Natural killer cell (primary cell): ENCODE measurements at regions of chr3 and their contacts with region 1.

Region 1: GRCh38 chr3:15405448-15406050 is 21.8 kb downstream of the METTL6 start:
- DNase-seq: peak in 1 of 2 donors; percentile 78
- ATAC-seq: peak; percentile 57 to 78 (median 74)
- H3K4me3 ChIP-seq: no peak overlapping the region
- H3K4me3 Mint-ChIP-seq: no peak overlapping the region
- H3K27ac ChIP-seq: no peak overlapping the region
- H3K27ac Mint-ChIP-seq: no peak overlapping the region
- H3K4me1 ChIP-seq: no peaks in the 10 kb centered on the region
- H3K4me1 Mint-ChIP-seq: no peaks in the 10 kb centered on the region
- H3K27me3 ChIP-seq: no peaks in the 10 kb centered on the region
- H3K27me3 Mint-ChIP-seq: no peaks in the 10 kb centered on the region
- CTCF ChIP-seq: peak; percentile 73

Region 2: DNA sequence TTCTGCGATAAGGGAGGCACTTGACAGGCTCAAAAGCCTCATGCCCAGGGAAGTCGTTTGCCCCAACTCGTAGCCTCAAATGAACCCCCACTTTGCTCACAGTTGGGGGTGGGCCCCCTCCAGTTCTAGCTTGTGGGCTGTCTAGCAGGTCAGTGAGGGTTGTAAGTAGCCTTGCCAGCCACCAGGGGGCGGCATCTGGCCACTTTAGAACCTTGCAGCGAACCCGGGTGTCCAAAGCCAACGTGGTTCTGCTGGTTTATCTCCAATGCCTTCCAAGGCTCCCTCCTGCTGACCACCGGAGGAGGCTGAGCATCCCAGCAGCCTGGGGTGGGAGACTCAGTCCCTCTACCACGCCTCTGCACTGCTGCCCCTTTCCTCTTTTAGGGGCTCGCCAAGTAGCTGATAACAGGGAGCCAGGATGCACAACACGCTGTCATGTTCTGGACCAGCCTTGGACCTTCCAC is 297.4 kb before region 1 on chr3:
- intact Hi-C with region 1: loop called (anchors 5 kb)
- DNase-seq: peak; percentile 72 to 89
- ATAC-seq: peak; percentile 94 to 99 (median 99)
- H3K4me3 ChIP-seq: no peak overlapping the region
- H3K4me3 Mint-ChIP-seq: no peak overlapping the region
- H3K27ac ChIP-seq: no peak overlapping the region
- H3K27ac Mint-ChIP-seq: no peak overlapping the region
- H3K4me1 ChIP-seq: peaks cover 5% of the 10 kb centered on the region
- H3K4me1 Mint-ChIP-seq: peaks cover 11 to 16% of the 10 kb centered on the region in 2 donors
- H3K27me3 ChIP-seq: no peaks in the 10 kb centered on the region
- H3K27me3 Mint-ChIP-seq: peaks cover 11 to 27% of the 10 kb centered on the region in 2 donors
- CTCF ChIP-seq: peak; percentile 89

Region 3: DNA sequence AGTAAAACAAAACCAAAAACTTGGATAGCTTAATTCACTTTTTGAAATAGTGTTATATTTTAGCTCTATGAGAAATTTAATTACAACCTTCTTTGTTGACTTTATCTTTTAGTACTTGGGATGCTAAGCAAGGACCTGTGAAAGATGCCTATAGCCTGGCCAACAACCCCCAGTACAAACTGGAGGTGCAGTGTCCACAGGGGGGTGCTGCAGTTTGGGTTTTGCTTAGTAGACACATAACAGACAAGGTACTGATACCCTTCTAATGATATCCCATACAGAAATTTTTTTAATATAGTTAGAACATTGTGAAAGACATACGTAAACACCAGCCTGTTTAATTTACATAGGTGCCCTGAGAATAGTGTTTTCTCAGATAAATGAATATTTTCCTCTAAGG is 164.2 kb before region 1 on chr3:
- intact Hi-C with region 1: loop called (anchors 1 kb)
- DNase-seq: peak; percentile 37 to 68
- ATAC-seq: peak; percentile 70 to 88 (median 86)
- H3K4me3 ChIP-seq: no peak overlapping the region
- H3K4me3 Mint-ChIP-seq: no peak overlapping the region
- H3K27ac ChIP-seq: no peak overlapping the region
- H3K27ac Mint-ChIP-seq: peak overlapping the region in 1 of 2 donors; percentile 31
- H3K4me1 ChIP-seq: no peaks in the 10 kb centered on the region
- H3K4me1 Mint-ChIP-seq: peaks cover 10% of the 10 kb centered on the region in 2 donors
- H3K27me3 ChIP-seq: no peaks in the 10 kb centered on the region
- H3K27me3 Mint-ChIP-seq: no peaks in the 10 kb centered on the region
- CTCF ChIP-seq: peak; percentile 40

Region 4: GRCh38 chr3:15384510-15385237 is 20.9 kb before region 1 on chr3:
- intact Hi-C with region 1: no loop called
- DNase-seq: no peak
- ATAC-seq: no peak
- H3K4me3 ChIP-seq: no peak overlapping the region
- H3K4me3 Mint-ChIP-seq: no peak overlapping the region
- H3K27ac ChIP-seq: peak overlapping the region; percentile 53
- H3K27ac Mint-ChIP-seq: no peak overlapping the region
- H3K4me1 ChIP-seq: no peaks in the 10 kb centered on the region
- H3K4me1 Mint-ChIP-seq: peaks cover 5 to 7% of the 10 kb centered on the region in 2 donors
- H3K27me3 ChIP-seq: no peaks in the 10 kb centered on the region
- H3K27me3 Mint-ChIP-seq: no peaks in the 10 kb centered on the region
- CTCF ChIP-seq: no peak